ENCODE measurements at regions of chr2 and their contacts with region 1.

Region 1: DNA sequence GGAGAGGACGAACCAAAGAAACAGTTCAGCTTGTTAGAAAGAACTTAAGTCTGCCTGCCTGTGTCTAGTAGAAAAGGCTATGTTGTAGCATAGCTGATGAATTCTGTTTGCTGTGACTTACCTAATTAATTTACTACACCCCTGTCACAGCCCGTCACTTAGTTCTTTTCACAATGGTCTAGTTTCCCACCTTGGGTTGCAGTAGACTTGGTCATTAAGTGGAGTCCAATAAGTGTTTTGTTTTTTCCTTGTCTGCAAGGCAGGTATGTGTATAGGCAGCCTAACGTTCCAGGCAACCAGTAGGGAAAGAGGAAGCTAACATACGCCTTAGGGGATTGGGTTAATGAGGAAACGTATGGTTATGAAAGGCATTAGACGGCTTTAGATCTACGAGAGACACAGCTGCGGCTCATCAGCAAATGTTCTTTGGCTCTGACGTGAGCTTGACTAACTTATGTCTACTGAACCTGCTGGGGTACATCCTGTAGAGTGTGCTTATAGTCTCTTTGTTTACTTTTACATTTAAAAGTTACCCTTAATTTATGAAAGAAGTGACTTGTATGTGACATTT is 180.1 kb downstream of the PRPF40A start:
- DNase-seq: no peak
- H3K4me3 ChIP-seq: no peak overlapping the region
- H3K27ac ChIP-seq: no peak overlapping the region
- H3K4me1 ChIP-seq: peaks cover 0 to 35% (median 29%) of the 10 kb centered on the region in 4 donors
- H3K27me3 ChIP-seq: no peaks in the 10 kb centered on the region
- CTCF ChIP-seq: no peak
- EP300 ChIP-seq: no peak
- POLR2A ChIP-seq: no peak

Region 2: DNA sequence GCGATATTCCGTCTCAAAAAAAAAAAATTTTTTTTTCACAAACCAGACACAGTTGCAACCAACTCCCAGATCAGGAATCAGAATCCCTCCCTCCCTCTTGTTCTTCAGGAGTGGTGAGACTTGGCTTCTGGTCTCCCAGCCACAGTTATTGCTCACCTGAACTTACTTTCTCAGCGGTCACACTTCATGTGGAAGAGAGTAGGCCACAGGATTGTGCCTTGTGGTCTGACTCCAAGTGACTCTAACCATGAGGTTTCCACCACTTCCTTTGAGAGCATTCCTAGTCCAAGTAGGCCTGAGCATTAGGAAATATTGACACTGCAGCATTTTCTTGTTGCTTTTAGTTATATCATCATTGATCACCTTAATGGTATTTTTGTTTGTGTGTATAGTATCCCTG is 190.1 kb before region 1 on chr2:
- intact Hi-C with region 1: loop called (anchors 10 kb)
- DNase-seq: no peak
- H3K4me3 ChIP-seq: no peak overlapping the region
- H3K27ac ChIP-seq: no peak overlapping the region
- H3K4me1 ChIP-seq: peaks cover 0 to 10% (median 0%) of the 10 kb centered on the region in 4 donors
- H3K27me3 ChIP-seq: no peaks in the 10 kb centered on the region
- CTCF ChIP-seq: no peak
- EP300 ChIP-seq: no peak
- POLR2A ChIP-seq: no peak

Measured in esophagus muscularis mucosa (tissue), 4 donors.